ENCODE measurements at regions of chr17 and their contacts with region 1.

Region 1: GRCh38 chr17:35088881-35089585 is 25.5 kb upstream of the RFFL start:
- DNase-seq: peak; percentile 87
- H3K4me3 Mint-ChIP-seq: peak overlapping the region; percentile 93
- H3K27ac Mint-ChIP-seq: peak overlapping the region; percentile 95
- H3K4me1 Mint-ChIP-seq: peaks cover 50% of the 10 kb centered on the region
- H3K27me3 Mint-ChIP-seq: no peaks in the 10 kb centered on the region

Region 2: DNA sequence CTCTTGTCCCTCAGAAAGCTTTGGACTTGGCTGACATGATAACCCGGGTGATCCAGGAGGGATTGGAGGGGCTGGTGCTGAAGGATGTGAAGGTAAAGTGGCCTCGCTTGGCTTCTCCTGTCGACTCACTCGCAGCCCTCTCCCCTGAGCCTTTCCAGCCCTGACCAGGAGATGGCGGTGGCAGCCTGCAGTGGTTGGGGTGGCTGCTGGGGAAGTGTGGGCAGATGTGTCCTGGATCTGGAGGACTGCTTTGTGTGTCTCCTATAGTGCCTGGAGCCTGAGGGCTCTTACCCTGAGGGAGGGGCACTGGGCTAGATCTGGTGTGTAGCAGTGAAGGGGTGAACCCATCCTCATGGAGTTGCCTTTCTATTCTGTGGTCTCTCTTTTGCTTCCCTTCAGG is 90.8 kb before region 1 on chr17:
- intact Hi-C with region 1: loop called (anchors 1 kb)
- DNase-seq: peak; percentile 77
- H3K4me3 Mint-ChIP-seq: no peak overlapping the region
- H3K27ac Mint-ChIP-seq: peak overlapping the region; percentile 11
- H3K4me1 Mint-ChIP-seq: peaks cover 21% of the 10 kb centered on the region
- H3K27me3 Mint-ChIP-seq: no peaks in the 10 kb centered on the region

Region 3: DNA sequence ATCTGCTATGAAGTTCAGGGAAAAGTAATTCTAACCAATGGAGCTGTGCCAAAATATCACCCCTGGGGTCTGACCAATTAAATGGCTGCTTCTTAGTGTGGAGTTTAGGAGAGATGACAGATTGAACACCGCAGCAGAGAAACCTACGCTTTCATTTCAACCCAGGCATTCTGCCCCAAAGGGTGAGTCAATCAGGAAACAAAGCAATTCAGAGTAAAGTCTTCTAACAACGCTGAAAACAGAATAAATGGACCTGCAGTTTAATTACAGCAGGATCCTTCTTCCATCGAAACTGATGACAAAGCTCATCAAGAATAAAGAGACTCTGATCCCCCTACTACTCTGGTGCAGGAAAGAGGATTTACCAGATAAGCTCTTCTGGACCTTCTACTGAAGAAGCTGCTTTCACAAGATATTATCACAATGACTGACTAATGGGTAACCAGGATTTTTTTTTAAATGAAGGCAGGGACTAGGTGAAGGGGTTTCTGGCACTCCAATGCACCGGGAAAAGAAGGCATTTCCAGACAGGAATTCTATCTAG is 42.2 kb before region 1 on chr17:
- intact Hi-C with region 1: loop called (anchors 1 kb)
- DNase-seq: peak; percentile 65
- H3K4me3 Mint-ChIP-seq: peak overlapping the region; percentile 66
- H3K27ac Mint-ChIP-seq: peak overlapping the region; percentile 97
- H3K4me1 Mint-ChIP-seq: peaks cover 49% of the 10 kb centered on the region
- H3K27me3 Mint-ChIP-seq: no peaks in the 10 kb centered on the region

Region 4: DNA sequence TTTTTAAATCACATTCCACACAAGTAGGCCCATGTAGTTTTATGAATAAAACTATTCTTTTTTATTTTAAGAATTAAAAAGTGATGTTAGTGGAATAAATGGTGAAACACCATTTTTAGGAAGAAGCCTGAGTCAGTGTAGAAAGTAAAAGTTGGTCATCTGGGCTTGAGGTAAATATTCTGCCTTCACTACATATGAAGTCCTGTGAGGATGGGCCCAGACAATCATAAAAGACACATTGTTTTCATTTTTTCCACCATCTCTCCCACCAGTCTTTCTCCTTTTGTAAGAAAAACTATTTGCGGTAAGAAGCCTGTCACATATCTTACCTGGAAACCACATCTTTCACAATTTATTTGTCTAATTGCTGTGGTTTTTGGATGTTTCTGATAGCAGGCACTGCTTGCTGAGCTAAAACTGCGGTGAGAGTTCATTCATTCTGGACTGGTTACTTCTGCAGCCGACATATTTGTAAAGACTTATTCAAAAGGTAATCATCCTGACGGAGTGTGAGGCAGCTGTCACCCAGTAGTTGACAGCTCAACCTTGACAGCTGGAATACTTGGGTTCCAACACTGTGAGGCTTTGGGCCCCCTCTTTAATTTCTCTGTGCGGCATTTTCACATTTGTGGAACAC is 14.9 kb before region 1 on chr17:
- intact Hi-C with region 1: loop called (anchors 1 kb)
- DNase-seq: no peak
- H3K4me3 Mint-ChIP-seq: peak overlapping the region; percentile 57
- H3K27ac Mint-ChIP-seq: peak overlapping the region; percentile 77
- H3K4me1 Mint-ChIP-seq: peaks cover 59% of the 10 kb centered on the region
- H3K27me3 Mint-ChIP-seq: no peaks in the 10 kb centered on the region

Region 5: DNA sequence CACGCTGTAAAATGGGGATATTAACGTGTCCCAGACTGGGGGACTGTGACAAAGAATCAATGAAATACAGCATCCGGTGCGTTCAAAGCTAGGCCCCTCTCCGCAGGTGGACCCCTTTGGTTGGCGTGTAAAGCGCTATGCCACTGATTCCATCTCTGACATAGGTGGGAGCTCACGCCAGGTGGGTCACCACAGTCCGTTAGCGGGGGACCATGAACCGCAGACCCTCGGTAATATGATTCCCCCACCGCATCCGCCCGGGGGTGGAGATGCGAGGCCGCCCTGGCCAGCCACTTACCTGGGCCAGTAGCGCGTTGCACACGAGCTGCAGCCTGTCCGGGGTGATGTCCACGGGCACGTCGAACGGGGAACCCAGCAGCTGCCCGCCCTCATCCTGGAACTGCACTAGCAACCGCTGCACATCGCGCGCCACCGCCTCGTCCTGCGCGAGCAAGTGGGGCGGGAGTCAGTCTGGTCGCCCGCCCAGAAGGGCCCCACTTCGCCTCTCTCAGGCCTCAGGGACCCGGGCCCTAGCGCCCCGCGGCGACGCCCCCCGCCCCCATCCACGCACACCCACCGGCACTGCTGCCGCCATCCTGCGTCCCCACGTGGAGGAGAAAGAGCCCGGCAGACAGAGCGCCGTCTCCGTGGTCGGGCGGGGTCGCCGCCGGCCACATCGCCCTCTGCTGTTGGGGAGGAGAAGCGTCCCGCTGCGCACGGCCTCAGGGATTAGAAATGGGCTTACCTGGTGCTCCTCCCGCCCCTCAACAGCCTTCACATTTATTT is 52.8 kb after region 1 on chr17 and contains the start of gene NLE1:
- intact Hi-C with region 1: loop called (anchors 1 kb)
- DNase-seq: peak; percentile 85
- H3K4me3 Mint-ChIP-seq: peak within 1 kb of the TSS; percentile 86
- H3K27ac Mint-ChIP-seq: peak within 1 kb of the TSS; percentile 80
- H3K4me1 Mint-ChIP-seq: no peaks in the 10 kb centered on the region
- H3K27me3 Mint-ChIP-seq: no peaks in the 10 kb centered on the region
- total RNA-seq, gene NLE1: 51.1 and 54.4 TPM in 2 replicates